WTC11 (cell line): ENCODE measurements at regions of chr1 and their contacts with region 1.

Region 1: GRCh38 chr1:119647734-119648619 is at the start of gene ZNF697:
- DNase-seq: peak; percentile 90
- ATAC-seq: peak; percentile 88
- H3K4me3 Mint-ChIP-seq: peak within 1 kb of the TSS; percentile 91
- H3K27ac Mint-ChIP-seq: peak within 1 kb of the TSS; percentile 64
- H3K4me1 Mint-ChIP-seq: peaks cover 43% of the 10 kb centered on the region
- H3K27me3 Mint-ChIP-seq: peaks cover 15% of the 10 kb centered on the region
- CTCF ChIP-seq: peak; percentile 46
- total RNA-seq, gene ZNF697: 13.9 to 18.0 TPM (median 14.2 TPM) in 3 replicates

Region 2: DNA sequence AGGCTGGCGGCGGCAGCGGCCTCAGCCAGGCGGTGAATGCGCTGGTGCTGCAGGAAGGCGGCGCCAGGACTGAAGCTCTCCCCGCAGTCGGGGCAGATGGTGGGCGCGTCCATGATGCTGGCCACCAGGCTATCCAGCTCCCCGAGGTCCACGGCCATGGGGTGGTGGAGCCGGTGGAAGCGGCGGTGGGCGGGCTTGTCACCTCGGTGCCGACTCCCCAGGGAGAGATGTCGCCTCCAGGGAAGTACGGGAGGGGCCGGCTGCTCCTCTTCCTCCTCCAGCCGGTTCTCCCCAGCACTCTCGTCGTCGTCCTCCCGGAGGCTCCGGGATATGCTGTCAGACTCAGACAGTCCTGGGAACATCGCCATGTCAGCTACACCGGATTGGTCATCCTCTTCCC is 24.3 kb before region 1 on chr1:
- CTCF ChIA-PET with region 1: interaction called, 26 read pairs
- POLR2A ChIA-PET with region 1: interaction called, 8 read pairs
- DNase-seq: no peak
- ATAC-seq: no peak
- H3K4me3 Mint-ChIP-seq: no peak overlapping the region
- H3K27ac Mint-ChIP-seq: no peak overlapping the region
- H3K4me1 Mint-ChIP-seq: peaks cover 41% of the 10 kb centered on the region
- H3K27me3 Mint-ChIP-seq: no peaks in the 10 kb centered on the region
- CTCF ChIP-seq: no peak

Region 3: DNA sequence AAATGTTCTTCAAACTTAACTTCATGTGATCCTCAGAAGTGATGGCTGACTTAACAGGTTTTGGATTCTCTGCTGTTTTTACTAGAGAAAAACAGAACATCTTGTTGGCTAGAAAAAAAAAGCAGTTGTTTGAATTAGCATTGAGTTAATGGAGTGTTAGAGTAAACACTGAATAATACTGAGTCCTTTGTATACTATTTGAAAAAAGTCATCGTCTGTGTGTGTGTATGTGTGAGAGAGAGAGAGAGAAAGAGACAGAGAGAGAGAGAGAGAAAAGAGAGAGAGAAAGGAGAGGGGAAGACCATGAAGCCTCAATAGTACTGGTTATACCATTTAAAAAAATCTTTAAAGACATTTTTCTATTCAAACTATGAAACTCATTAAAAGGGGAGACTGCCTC is 10.3 kb before region 1 on chr1:
- CTCF ChIA-PET with region 1: interaction called, 19 read pairs
- POLR2A ChIA-PET with region 1: interaction called, 10 read pairs
- DNase-seq: no peak
- ATAC-seq: no peak
- H3K4me3 Mint-ChIP-seq: no peak overlapping the region
- H3K27ac Mint-ChIP-seq: no peak overlapping the region
- H3K4me1 Mint-ChIP-seq: peaks cover 27% of the 10 kb centered on the region
- H3K27me3 Mint-ChIP-seq: no peaks in the 10 kb centered on the region
- CTCF ChIP-seq: no peak

Region 4: DNA sequence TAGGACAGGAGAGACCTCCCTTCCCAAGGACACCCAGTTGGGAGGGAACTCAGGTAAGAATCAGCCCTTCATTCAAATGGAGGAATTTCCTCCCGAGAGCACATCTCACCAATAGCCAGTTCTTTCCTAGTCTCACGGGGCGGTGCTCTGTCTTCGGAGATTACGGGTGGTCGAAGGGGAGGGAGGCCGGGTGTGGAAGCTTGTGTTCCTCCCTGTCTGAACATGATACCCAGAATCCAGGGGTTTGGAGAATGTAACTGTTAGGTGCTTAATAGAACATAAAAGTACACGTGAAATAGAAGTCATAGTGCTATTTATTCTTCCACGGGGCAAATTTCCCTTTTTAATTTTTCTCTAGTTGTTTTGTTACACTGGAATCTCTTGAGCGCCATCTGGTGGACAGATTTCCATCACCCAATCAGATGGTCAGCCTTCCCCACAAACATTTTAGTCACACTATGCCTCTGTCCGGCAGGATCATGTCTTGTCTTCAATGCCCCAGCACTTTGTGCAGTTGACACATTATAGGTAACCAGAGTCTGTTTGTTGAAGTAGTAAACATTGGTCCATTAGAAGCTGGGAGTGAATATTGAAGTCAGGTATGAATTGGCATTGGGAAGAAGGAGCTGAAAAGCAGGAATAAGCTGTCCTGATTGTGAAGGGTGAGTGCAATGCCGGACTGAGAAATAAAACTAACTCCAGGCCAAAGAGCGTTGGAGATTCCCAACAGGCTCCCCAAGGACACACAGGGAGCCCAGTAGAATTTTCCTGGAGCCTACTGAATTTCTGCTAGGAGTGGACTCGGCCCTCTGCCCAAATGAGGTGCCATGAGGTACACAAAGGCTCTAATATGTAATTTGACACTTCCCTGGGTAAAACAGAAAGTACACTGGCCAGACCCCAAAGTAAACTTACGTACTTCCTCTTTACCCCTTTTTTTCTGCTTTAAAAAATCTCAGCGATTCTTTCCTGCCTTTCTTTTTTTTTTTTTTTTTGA is 27.7 kb after region 1 on chr1:
- CTCF ChIA-PET with region 1: interaction called, 75 read pairs
- POLR2A ChIA-PET with region 1: interaction called, 10 read pairs
- DNase-seq: peak; percentile 84
- ATAC-seq: peak; percentile 88
- H3K4me3 Mint-ChIP-seq: peak overlapping the region; percentile 68
- H3K27ac Mint-ChIP-seq: peak overlapping the region; percentile 96
- H3K4me1 Mint-ChIP-seq: peaks cover 55% of the 10 kb centered on the region
- H3K27me3 Mint-ChIP-seq: no peaks in the 10 kb centered on the region
- CTCF ChIP-seq: peak; percentile 72

Region 5: DNA sequence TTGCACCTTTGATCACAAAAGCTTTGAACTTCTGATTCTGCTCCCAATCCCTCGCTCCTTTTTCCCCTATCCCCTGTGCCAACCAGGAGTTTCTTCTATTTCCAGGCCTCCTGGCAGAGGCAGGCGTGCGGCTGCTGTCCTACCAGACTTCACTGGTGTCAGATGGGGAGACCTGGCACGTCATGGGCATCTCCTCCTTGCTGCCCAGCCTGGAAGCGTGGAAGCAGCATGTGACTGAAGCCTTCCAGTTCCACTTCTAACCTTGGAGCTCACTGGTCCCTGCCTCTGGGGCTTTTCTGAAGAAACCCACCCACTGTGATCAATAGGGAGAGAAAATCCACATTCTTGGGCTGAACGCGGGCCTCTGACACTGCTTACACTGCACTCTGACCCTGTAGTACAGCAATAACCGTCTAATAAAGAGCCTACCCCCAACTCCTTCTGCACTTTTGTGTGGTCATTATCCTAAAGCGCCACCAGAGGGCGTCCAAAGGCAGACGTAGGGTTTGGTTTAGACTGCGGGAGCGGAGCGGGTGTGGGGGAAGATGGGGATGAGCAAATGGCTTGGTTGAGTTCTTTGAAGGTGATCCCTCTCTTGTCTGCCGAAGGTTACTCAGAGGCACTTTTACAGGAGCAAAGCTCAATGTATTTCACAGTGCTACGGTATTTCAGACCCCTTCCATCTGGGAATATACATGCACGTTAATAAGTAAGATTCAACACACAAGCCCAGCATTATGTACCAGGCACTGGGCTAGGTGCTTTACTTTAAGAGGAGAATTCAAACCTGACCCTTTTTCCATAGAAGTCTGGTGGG is 96.0 kb after region 1 on chr1:
- CTCF ChIA-PET with region 1: interaction called, 11 read pairs
- POLR2A ChIA-PET with region 1: no interaction called
- DNase-seq: peak; percentile 71
- ATAC-seq: peak; percentile 78
- H3K4me3 Mint-ChIP-seq: no peak overlapping the region
- H3K27ac Mint-ChIP-seq: peak overlapping the region; percentile 91
- H3K4me1 Mint-ChIP-seq: peaks cover 32% of the 10 kb centered on the region
- H3K27me3 Mint-ChIP-seq: no peaks in the 10 kb centered on the region
- CTCF ChIP-seq: peak; percentile 83

Region 6: GRCh38 chr1:119799599-119800177 is 151.7 kb after region 1 on chr1:
- CTCF ChIA-PET with region 1: no interaction called
- POLR2A ChIA-PET with region 1: no interaction called
- DNase-seq: no peak
- ATAC-seq: no peak
- H3K4me3 Mint-ChIP-seq: no peak overlapping the region
- H3K27ac Mint-ChIP-seq: no peak overlapping the region
- H3K4me1 Mint-ChIP-seq: no peaks in the 10 kb centered on the region
- H3K27me3 Mint-ChIP-seq: no peaks in the 10 kb centered on the region; the same call in 1 of the 2 replicates
- CTCF ChIP-seq: no peak

Region 7: DNA sequence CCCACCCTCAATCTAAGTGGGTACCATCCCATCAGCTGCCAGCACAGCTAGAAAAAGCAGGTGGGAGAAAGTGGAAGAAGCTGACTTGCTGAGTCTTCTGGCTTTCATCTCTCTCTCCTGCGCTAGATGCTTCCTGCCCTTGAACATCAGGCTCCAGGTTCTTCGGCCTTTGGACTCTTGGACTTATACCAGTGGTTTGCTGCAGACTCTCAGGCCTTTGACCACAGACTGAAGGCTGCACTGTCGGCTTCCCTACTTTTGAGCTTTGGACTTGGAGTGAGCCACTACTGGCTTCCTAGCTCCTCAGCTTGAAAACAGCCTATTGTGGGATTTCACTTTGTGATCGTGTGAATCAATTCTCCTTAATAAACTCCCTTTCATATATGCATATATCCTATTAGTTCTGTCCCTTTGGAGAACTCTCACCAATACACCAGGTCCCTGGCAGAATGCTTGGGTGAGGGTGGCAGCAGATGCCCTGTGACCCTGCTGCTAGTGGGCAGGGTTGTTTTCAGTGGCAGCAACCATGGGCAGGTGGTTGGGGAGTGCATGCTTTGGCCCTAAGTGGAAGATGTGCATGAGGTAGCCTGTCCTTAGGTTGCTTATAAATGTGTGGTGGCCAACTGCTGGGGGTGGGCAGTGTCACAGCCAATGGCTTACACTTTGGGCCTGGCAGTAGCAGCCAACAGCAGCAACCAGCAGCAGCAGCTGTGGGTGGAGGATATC is 259.1 kb after region 1 on chr1:
- CTCF ChIA-PET with region 1: no interaction called
- POLR2A ChIA-PET with region 1: no interaction called
- DNase-seq: no peak
- ATAC-seq: no peak
- H3K4me3 Mint-ChIP-seq: no peak overlapping the region
- H3K27ac Mint-ChIP-seq: no peak overlapping the region
- H3K4me1 Mint-ChIP-seq: peaks cover 11% of the 10 kb centered on the region
- H3K27me3 Mint-ChIP-seq: peaks cover 6% of the 10 kb centered on the region
- CTCF ChIP-seq: no peak